Dendritic cell treated with granulocyte-macrophage colony-stimulating factor and Interleukin-4, amounts not matched to agents 40 ng/mL and 50 ng/mL, for 4 days (primary cell): ENCODE measurements at regions of chr1 and their contacts with region 1.

Region 1: GRCh38 chr1:186337554-186337953 is 37.5 kb downstream of the TPR start:
- H3K4me3 Mint-ChIP-seq: no peak overlapping the region
- H3K27ac Mint-ChIP-seq: no peak overlapping the region
- H3K4me1 Mint-ChIP-seq: no peaks in the 10 kb centered on the region
- H3K27me3 Mint-ChIP-seq: no peaks in the 10 kb centered on the region

Region 2: GRCh38 chr1:184716158-184716557 is 1621.4 kb before region 1 on chr1:
- intact Hi-C with region 1: loop called (anchors 10 kb)
- H3K4me3 Mint-ChIP-seq: no peak overlapping the region
- H3K27ac Mint-ChIP-seq: no peak overlapping the region
- H3K4me1 Mint-ChIP-seq: no peaks in the 10 kb centered on the region
- H3K27me3 Mint-ChIP-seq: no peaks in the 10 kb centered on the region

Region 3: DNA sequence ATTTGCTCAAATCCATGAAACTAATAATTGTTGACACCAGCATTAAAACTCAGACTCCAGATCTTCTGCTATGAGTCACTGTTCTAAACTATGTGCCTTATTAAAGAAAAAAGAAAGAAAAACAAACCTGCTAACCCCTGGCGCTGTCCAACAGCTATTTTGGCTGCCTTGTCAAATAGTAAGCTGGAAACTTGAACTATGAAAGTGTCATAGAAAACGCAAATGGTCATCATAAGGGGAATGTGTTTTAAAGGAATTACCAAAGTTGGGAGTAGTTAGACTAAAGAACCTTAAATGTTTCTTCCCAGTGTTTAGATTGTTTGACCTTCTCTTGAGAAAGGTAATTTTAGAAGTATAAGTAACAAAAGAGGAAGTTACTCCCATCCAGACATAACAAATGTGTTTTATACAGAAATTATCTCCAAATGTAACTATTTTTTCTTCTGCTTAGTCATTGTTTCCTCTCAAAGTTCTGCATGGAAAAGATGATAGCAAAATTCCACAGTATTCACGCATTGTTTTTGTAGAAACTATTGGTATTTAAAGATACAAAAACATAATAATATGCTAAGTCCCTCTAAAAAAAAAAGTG is 234.9 kb before region 1 on chr1:
- intact Hi-C with region 1: no loop called
- H3K4me3 Mint-ChIP-seq: no peak overlapping the region
- H3K27ac Mint-ChIP-seq: peak overlapping the region; percentile 27
- H3K4me1 Mint-ChIP-seq: peaks cover 4% of the 10 kb centered on the region
- H3K27me3 Mint-ChIP-seq: no peaks in the 10 kb centered on the region

Region 4: GRCh38 chr1:186323865-186324264 is 13.7 kb before region 1 on chr1:
- intact Hi-C with region 1: loop called (anchors 2 kb)
- H3K4me3 Mint-ChIP-seq: no peak overlapping the region
- H3K27ac Mint-ChIP-seq: no peak overlapping the region
- H3K4me1 Mint-ChIP-seq: no peaks in the 10 kb centered on the region
- H3K27me3 Mint-ChIP-seq: no peaks in the 10 kb centered on the region

Region 5: GRCh38 chr1:186474208-186474607 is 136.7 kb after region 1 on chr1:
- intact Hi-C with region 1: no loop called
- H3K4me3 Mint-ChIP-seq: no peak overlapping the region
- H3K27ac Mint-ChIP-seq: no peak overlapping the region
- H3K4me1 Mint-ChIP-seq: no peaks in the 10 kb centered on the region
- H3K27me3 Mint-ChIP-seq: no peaks in the 10 kb centered on the region